AG04449 (cell line): ENCODE measurements at regions of chr12 and their contacts with region 1.

Region 1: GRCh38 chr12:67943226-67943892 is 45.9 kb upstream of the IFNG-AS1 start:
- DNase-seq: peak; percentile 31
- H3K4me3 ChIP-seq: no peak overlapping the region
- CTCF ChIP-seq: peak; percentile 49

Region 2: DNA sequence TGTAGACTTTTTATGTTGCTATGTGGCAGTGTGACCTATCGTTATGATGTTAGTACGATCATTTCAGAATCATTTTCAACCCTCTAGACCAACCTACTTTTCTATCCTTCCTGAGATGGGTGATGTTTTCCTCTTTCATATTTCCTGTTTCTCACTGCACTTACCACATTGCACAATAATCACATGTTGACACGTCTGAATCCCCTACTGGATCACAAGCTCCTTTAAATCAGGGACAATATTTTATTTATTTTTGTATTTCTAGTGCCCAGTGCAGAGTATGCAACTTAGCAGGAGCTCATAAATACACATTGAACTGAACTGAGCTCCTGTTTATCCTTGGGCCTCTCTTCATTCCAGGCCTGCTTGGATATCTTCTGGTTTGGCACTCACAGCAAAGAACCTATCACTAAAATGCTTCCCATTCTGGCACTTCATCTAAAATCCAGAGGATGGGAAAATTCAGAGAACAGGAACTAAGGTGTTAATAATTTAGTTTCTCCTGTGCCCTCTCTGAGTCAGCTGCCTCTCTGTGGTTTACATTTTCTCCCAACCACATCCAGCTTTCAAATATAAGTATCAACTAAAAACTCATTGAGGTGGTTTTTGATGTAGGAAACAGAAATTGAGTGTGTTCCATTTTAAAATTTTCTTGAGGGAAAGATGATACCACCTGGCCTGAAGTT is 364.2 kb before region 1 on chr12:
- CTCF ChIA-PET with region 1: no interaction called
- POLR2A ChIA-PET with region 1: no interaction called
- DNase-seq: no peak
- H3K4me3 ChIP-seq: no peak overlapping the region
- CTCF ChIP-seq: no peak

Region 3: GRCh38 chr12:67655829-67656228 is 287.5 kb before region 1 on chr12:
- CTCF ChIA-PET with region 1: interaction called, 10 read pairs
- POLR2A ChIA-PET with region 1: no interaction called
- DNase-seq: no peak
- H3K4me3 ChIP-seq: no peak overlapping the region
- CTCF ChIP-seq: no peak

Region 4: GRCh38 chr12:67662910-67663538 is 280.3 kb before region 1 on chr12:
- CTCF ChIA-PET with region 1: interaction called, 18 read pairs
- POLR2A ChIA-PET with region 1: no interaction called
- DNase-seq: peak; percentile 83
- H3K4me3 ChIP-seq: no peak overlapping the region
- CTCF ChIP-seq: no peak

Region 5: GRCh38 chr12:67925065-67925464 is 18.3 kb before region 1 on chr12:
- CTCF ChIA-PET with region 1: interaction called, 21 read pairs
- POLR2A ChIA-PET with region 1: no interaction called
- DNase-seq: no peak
- H3K4me3 ChIP-seq: no peak overlapping the region
- CTCF ChIP-seq: no peak